Ascending aorta (tissue), 2 donors: ENCODE measurements at regions of chr5 and their contacts with region 1.

Region 1: DNA sequence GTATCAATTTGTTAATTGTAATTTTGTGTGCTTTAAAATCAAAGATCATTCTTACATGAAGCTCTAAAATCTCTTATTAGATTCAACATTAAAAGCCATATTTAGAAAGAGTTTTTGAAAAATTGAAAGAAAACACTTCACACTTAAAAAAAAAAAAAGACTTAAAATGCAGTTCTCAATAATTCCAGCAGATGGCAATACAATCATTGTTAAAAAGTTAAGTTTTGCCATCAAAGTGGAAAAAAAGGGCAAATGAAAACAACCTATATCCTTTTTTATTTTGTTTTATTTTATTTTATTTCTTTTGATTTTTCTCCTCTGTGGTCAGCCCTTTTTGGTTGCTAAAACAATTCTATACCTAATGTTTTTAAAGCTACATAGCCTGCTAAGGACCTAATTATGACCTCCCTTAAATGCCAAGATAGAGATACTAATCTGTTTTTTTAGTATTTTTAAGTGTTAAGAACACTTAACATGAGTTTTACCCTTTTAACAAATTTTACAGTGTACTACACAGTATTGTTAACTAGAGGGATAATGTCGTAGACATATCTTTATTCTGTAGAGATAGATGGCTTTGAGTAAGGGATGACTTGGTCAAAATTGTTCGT is 154.2 kb upstream of the DAB2 start:
- DNase-seq: no peak
- H3K4me3 ChIP-seq: no peak overlapping the region
- H3K27ac ChIP-seq: no peak overlapping the region
- H3K4me1 ChIP-seq: no peaks in the 10 kb centered on the region
- H3K27me3 ChIP-seq: no peaks in the 10 kb centered on the region
- CTCF ChIP-seq: peak in 2 of 3 experiments; percentile 67

Region 2: GRCh38 chr5:39424736-39425637 is 154.0 kb before region 1 on chr5 and contains the start of gene DAB2:
- intact Hi-C with region 1: no loop called
- DNase-seq: peak; percentile 74 to 92
- H3K4me3 ChIP-seq: peak within 1 kb of the TSS; percentile 65 to 80
- H3K27ac ChIP-seq: peak within 1 kb of the TSS; percentile 77 to 85
- H3K4me1 ChIP-seq: peaks cover 0 to 27% of the 10 kb centered on the region in 2 donors
- H3K27me3 ChIP-seq: no peaks in the 10 kb centered on the region
- CTCF ChIP-seq: peak; percentile 45 to 68 (median 60)
- total RNA-seq, gene DAB2: 33.6 TPM

Region 3: GRCh38 chr5:39475881-39476842 is 102.8 kb before region 1 on chr5:
- intact Hi-C with region 1: no loop called
- DNase-seq: no peak
- H3K4me3 ChIP-seq: no peak overlapping the region
- H3K27ac ChIP-seq: peak overlapping the region in 1 of 2 donors; percentile 47
- H3K4me1 ChIP-seq: peaks cover 3 to 11% of the 10 kb centered on the region in 2 donors
- H3K27me3 ChIP-seq: no peaks in the 10 kb centered on the region
- CTCF ChIP-seq: no peak

Region 4: GRCh38 chr5:39992617-39993203 is 413.7 kb after region 1 on chr5:
- intact Hi-C with region 1: no loop called
- DNase-seq: no peak
- H3K4me3 ChIP-seq: no peak overlapping the region
- H3K27ac ChIP-seq: no peak overlapping the region
- H3K4me1 ChIP-seq: no peaks in the 10 kb centered on the region
- H3K27me3 ChIP-seq: no peaks in the 10 kb centered on the region
- CTCF ChIP-seq: no peak

Region 5: DNA sequence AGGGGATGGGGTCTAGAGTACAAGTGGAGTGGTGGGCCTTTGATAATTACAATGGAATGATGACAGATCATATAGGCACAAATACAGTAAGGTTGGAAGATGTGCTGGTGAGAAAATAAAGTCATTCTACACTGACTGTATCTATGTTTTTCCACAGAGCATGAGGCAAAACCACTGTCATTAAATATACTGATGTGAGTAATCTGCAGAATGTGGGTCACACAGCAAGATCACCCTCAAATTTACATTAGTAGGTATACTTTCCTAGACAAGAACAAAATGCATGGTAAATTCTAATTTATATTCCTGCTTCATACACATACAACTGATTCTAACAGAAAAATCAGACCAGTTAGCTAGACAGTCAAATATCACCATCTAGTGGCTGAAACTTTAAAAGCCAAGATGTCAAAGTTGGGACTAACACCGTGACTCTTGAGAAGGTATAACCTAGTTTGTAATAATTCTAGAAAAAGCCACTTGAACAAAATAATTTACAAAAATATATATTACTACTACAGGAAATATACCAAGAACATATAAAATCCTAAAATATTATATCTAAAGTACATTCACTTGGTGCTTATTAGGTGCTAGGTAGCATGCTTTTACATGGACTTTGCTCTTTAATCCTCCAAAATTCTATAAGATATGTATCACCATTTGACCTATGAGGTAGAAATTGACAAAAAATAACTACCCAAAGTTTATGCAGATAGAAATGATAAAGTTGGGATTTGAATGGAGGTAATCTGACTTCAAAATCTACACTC is 1157.3 kb after region 1 on chr5:
- intact Hi-C with region 1: loop called (anchors 10 kb)
- DNase-seq: no peak
- H3K4me3 ChIP-seq: no peak overlapping the region
- H3K27ac ChIP-seq: no peak overlapping the region
- H3K4me1 ChIP-seq: peaks cover 0 to 5% of the 10 kb centered on the region in 2 donors
- H3K27me3 ChIP-seq: no peaks in the 10 kb centered on the region
- CTCF ChIP-seq: peak; percentile 47 to 68 (median 56)